Dendritic cell treated with granulocyte-macrophage colony-stimulating factor and Interleukin-4, amounts not matched to agents 40 ng/mL and 50 ng/mL, for 4 days (primary cell): ENCODE measurements at regions of chr4 and their contacts with region 1.

Region 1: DNA sequence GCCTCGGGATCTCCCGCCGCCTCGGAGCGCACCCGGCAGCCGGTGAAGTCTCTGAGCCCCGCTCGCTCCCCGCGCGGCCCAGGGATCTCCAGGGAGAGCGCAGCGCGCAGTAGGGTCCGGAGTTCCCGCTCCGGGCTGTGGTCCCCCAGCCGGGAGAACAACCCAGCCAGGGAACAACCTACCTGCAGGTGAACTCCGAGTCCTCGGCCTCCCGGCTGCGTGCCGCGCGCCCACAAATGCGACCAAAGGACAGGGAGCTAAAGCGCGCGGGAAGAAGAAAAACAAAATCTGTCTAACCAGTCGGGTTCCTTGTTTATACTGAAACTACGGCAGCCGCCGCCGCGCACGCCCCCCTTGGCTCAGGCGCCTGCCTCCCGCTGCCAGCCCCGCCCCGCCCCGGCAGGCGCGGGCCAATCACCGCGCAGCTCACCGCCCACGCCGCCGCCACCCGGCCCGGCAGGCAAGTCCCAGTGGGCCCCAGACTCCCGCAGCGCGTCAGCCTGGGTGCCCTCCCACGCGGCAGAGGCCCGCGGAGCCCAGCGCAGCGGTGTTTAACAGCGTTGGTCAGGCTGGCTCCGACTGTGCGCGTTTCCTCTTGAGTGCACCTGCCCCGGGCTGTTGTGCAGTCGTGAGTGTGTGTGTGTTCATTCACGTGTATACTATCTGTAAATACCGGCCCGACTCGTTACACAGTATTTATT is at the start of gene RASGEF1B:
- H3K4me3 Mint-ChIP-seq: peak within 1 kb of the TSS; percentile 95
- H3K27ac Mint-ChIP-seq: peak within 1 kb of the TSS; percentile 94
- H3K4me1 Mint-ChIP-seq: peaks cover 47% of the 10 kb centered on the region
- H3K27me3 Mint-ChIP-seq: no peaks in the 10 kb centered on the region

Region 2: DNA sequence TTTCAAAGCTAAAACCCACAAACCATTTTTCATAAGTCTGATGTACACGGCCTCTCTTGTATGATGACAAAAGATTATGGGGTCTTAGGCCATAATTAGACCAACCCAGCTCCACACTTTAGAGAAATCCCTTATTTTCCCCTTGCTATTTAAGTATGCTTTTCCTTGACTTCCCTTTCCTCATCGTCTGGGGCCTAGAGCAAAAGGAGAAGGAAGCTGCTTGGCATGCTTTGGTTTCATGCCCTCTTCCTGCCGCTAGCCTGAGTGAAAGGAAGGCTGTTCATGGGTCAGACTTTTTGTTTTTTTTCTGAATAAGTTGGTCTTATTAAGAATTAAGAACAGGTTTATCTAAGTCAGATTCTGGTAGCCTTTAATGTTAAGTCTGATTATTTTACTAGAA is 10.6 kb after region 1 on chr4:
- intact Hi-C with region 1: loop called (anchors 1 kb)
- H3K4me3 Mint-ChIP-seq: no peak overlapping the region
- H3K27ac Mint-ChIP-seq: peak overlapping the region; percentile 46
- H3K4me1 Mint-ChIP-seq: peaks cover 20% of the 10 kb centered on the region
- H3K27me3 Mint-ChIP-seq: no peaks in the 10 kb centered on the region

Region 3: DNA sequence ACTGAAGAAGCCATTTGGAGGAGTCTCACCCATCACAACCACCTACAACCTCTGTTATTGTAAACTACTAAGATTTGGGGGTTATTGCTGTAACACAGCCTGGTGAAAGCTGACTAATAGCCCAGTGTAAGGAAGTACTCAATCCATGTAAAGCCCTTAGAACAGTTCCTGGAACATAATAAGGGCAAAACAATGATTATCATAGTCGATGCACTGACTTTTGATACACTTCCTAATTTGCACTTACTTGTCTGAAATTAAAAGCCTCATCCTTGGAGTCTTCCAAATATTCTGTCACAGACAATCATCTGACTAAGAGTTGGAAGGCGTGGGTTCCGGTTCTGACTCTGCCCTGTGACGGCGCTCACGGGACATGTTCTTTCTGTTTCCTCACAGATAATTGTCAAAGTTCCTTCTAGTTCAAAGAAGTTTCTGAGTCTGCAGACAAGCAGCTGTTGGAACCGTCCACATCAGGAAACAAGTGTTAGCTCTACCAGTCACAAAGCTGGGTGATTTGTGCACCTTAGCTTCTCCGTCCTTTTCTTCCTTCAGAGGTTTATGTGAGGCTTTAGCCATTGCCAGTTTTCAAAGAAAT is 33.4 kb after region 1 on chr4:
- intact Hi-C with region 1: loop called (anchors 1 kb)
- H3K4me3 Mint-ChIP-seq: peak overlapping the region; percentile 37
- H3K27ac Mint-ChIP-seq: peak overlapping the region; percentile 97
- H3K4me1 Mint-ChIP-seq: peaks cover 73% of the 10 kb centered on the region
- H3K27me3 Mint-ChIP-seq: no peaks in the 10 kb centered on the region

Region 4: DNA sequence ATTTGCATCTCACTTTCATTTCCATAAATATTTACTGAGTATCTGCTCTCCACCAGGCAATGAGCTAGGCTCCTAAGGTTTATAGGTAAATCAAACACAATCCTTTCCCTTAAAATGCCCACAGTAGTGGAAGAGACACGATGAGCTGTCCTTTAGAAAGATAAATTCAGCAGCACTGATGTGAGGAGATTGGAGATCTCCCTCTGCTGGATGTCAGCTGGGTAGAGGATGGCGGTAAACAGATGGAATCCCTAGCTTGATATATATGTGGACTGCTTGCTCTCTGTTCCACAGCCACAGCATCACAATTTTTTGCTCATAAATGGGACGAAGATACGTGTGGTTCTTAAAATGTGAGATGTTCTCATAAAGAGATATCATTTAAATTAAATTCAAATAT is 216.3 kb after region 1 on chr4:
- intact Hi-C with region 1: loop called (anchors 5 kb)
- H3K4me3 Mint-ChIP-seq: no peak overlapping the region
- H3K27ac Mint-ChIP-seq: no peak overlapping the region
- H3K4me1 Mint-ChIP-seq: no peaks in the 10 kb centered on the region
- H3K27me3 Mint-ChIP-seq: no peaks in the 10 kb centered on the region

Region 5: GRCh38 chr4:81844717-81845116 is 373.0 kb after region 1 on chr4:
- intact Hi-C with region 1: loop called (anchors 1 kb)
- H3K4me3 Mint-ChIP-seq: no peak overlapping the region
- H3K27ac Mint-ChIP-seq: no peak overlapping the region
- H3K4me1 Mint-ChIP-seq: no peaks in the 10 kb centered on the region
- H3K27me3 Mint-ChIP-seq: no peaks in the 10 kb centered on the region

Region 6: GRCh38 chr4:82373816-82374625 is 902.3 kb after region 1 on chr4 and contains the start of gene HNRNPD:
- intact Hi-C with region 1: loop called (anchors 5 kb)
- H3K4me3 Mint-ChIP-seq: peak within 1 kb of the TSS; percentile 86
- H3K27ac Mint-ChIP-seq: peak within 1 kb of the TSS; percentile 97
- H3K4me1 Mint-ChIP-seq: peaks cover 43% of the 10 kb centered on the region
- H3K27me3 Mint-ChIP-seq: no peaks in the 10 kb centered on the region

Region 7: GRCh38 chr4:82428969-82429727 is 957.4 kb after region 1 on chr4:
- intact Hi-C with region 1: no loop called
- H3K4me3 Mint-ChIP-seq: peak overlapping the region; percentile 87
- H3K27ac Mint-ChIP-seq: peak overlapping the region; percentile 93
- H3K4me1 Mint-ChIP-seq: peaks cover 42% of the 10 kb centered on the region
- H3K27me3 Mint-ChIP-seq: no peaks in the 10 kb centered on the region